ENCODE measurements at regions of chr1 and their contacts with region 1.

Region 1: GRCh38 chr1:195501118-195501517 is 1107.1 kb downstream of the KCNT2 start:
- DNase-seq: no peak
- H3K4me3 ChIP-seq: no peak overlapping the region
- H3K27ac ChIP-seq: no peak overlapping the region
- H3K4me1 ChIP-seq: no peaks in the 10 kb centered on the region
- H3K27me3 ChIP-seq: no peaks in the 10 kb centered on the region
- CTCF ChIP-seq: no peak
- EP300 ChIP-seq: no peak
- POLR2A ChIP-seq: no peak

Region 2: DNA sequence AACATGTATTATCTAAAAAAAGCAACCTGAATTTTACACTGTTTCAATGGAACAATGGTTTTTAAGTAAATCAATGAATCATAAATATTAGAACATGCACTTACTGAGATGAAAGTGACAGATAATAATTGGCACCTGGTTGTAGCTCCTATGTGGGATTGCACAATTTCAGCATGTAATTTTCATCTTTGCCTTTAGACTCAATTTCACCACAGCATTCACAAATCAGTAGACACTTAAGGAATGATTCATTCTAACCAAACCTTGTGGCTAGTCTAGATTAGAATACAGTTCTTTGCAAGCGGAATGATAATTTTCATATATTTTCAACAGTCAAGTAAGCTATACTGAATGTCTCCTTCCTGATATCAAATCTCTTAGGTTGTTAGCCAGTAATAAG is 253.8 kb after region 1 on chr1:
- in situ Hi-C with region 1: no loop called
- intact Hi-C with region 1: loop called (anchors 10 kb)
- DNase-seq: no peak
- H3K4me3 ChIP-seq: no peak overlapping the region
- H3K27ac ChIP-seq: no peak overlapping the region
- H3K4me1 ChIP-seq: no peaks in the 10 kb centered on the region
- H3K27me3 ChIP-seq: no peaks in the 10 kb centered on the region
- CTCF ChIP-seq: no peak
- EP300 ChIP-seq: no peak
- POLR2A ChIP-seq: no peak